Activated naive CD4-positive, alpha-beta T cell treated with anti-CD3 and anti-CD28 coated beads, Interleukin-2, amount 10 ng/mL, durations not matched to agents 7 days and 5 days (primary cell): ENCODE measurements at regions of chr6 and their contacts with region 1.

Region 1: GRCh38 chr6:132798869-132799538 is 567 bp upstream of the SLC18B1 start:
- DNase-seq: peak; percentile 76
- H3K4me3 Mint-ChIP-seq: no peak overlapping the region
- H3K27ac Mint-ChIP-seq: no peak overlapping the region
- H3K4me1 Mint-ChIP-seq: peaks cover 16% of the 10 kb centered on the region
- H3K27me3 Mint-ChIP-seq: no peaks in the 10 kb centered on the region

Region 2: GRCh38 chr6:132780770-132781371 is 18.1 kb before region 1 on chr6:
- CTCF ChIA-PET with region 1: interaction called, 12 read pairs
- DNase-seq: peak; percentile 25
- H3K4me3 Mint-ChIP-seq: no peak overlapping the region
- H3K27ac Mint-ChIP-seq: no peak overlapping the region
- H3K4me1 Mint-ChIP-seq: no peaks in the 10 kb centered on the region
- H3K27me3 Mint-ChIP-seq: no peaks in the 10 kb centered on the region

Region 3: GRCh38 chr6:132813173-132813856 is 14.3 kb after region 1 on chr6:
- CTCF ChIA-PET with region 1: interaction called, 25 read pairs
- DNase-seq: peak; percentile 48
- H3K4me3 Mint-ChIP-seq: peak overlapping the region; percentile 96
- H3K27ac Mint-ChIP-seq: peak overlapping the region; percentile 100
- H3K4me1 Mint-ChIP-seq: peaks cover 45% of the 10 kb centered on the region
- H3K27me3 Mint-ChIP-seq: peaks cover 3% of the 10 kb centered on the region

Region 4: GRCh38 chr6:132907914-132908313 is 108.9 kb after region 1 on chr6:
- CTCF ChIA-PET with region 1: no interaction called
- DNase-seq: no peak
- H3K4me3 Mint-ChIP-seq: no peak overlapping the region
- H3K27ac Mint-ChIP-seq: no peak overlapping the region
- H3K4me1 Mint-ChIP-seq: no peaks in the 10 kb centered on the region
- H3K27me3 Mint-ChIP-seq: no peaks in the 10 kb centered on the region